ENCODE measurements at regions of chr5 and their contacts with region 1.

Region 1: DNA sequence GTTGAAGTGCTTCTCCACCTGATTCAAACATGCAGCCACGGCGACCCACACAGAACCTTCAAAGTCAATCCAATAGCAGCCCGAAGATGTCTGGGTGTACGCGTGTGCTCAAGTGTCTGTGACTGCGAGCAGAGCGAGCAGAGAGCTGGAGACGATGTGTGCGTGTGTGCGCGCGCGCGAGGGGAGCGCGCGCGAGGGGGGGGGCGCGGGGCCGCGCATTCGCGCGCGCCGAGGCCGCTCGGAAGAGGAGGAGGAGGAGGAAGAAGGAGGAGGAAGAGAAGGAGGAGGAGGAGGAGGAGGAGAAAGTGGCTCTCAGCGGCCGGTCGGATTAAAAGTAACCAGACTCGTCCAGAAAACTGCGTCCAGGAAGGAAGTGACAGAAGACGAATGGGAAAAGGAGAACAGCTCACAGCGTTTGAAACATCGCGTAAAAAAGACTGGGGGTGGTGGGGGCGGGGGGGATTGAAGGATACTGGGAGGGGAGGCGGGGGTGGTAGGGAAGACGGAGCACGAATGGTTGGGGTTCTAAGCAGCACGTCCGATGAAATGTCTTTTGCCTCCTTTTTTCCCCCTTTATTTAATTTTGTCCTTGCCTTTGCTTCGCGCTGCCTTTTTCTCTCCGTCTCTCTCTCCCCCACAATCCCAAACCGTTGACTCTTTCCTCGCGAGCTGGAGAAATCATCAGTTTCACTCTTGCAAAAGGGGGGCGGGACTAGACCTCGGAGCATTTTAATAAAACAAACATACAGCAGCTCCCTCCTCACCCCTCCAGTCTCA is at the start of gene MEF2C:
- DNase-seq: peak; percentile 84 to 89 (median 86)
- ATAC-seq: peak; percentile 74
- H3K4me3 ChIP-seq: peak within 1 kb of the TSS; percentile 55
- H3K27ac ChIP-seq: peak within 1 kb of the TSS; percentile 87
- H3K4me1 ChIP-seq: peaks cover 3 to 8% of the 10 kb centered on the region in 2 experiments; a peak in 4 of 5 replicates
- H3K27me3 ChIP-seq: no peaks in the 10 kb centered on the region
- CTCF ChIP-seq: no peak
- EP300 ChIP-seq: peak; percentile 22; the same call in 1 of the 2 replicates
- POLR2A ChIP-seq: peak; percentile 59; the same call in 1 of the 2 replicates
- RAD21 ChIP-seq: no peak
- polyA plus RNA-seq, gene MEF2C: 48.2 to 66.3 TPM

Region 2: DNA sequence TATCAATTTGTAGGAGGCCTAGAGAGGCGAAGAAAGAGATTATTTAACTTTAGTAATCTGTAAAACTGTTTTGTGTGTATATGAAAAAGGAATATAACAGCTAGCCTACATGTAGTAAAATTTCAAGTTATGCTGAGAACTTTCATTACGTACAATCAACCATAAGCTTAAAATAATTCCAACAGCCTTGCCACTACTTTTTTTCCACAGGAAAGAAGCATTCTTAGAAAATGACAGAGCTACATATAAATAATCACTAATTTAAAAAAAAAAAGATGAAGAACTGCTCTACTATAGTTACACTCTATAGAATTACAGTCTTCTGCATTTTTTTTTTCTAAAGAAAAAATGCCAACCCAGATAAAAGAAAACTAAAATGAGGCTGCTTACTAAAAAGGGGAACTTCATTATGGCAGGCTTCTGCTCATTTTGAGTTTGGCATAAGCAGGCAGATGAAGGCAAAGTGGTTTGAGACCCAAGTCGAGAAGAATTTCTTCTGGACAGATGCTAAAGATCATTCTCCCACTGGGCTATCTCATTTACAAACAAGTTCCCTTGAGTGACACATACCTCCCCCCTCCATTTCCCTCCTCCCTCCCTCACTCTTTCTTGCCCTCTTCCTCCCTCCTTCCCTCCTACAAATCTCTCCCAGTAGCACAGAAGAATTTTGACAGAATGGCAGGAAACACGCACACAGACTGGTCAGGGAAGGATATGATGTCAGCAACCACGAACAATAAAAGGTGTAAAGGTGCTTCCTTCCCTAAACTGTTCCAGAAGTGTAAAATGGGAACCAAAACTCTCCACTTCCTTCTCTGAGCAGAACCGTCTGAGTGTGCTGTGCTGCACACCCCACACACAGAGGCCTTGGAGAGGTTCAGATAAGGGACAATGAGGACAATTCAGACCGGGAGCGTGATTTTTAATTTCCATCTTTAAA is 56.3 kb before region 1 on chr5:
- CTCF ChIA-PET with region 1: no interaction called
- POLR2A ChIA-PET with region 1: interaction called, 4 read pairs
- in situ Hi-C with region 1: no loop called
- intact Hi-C with region 1: loop called (anchors 5 kb)
- DNase-seq: peak; percentile 17 to 72 (median 38)
- ATAC-seq: peak; percentile 80
- H3K4me3 ChIP-seq: no peak overlapping the region
- H3K27ac ChIP-seq: peak overlapping the region; percentile 69; the same call in 2 of the 3 replicates
- H3K4me1 ChIP-seq: peaks cover 0 to 16% of the 10 kb centered on the region in 2 experiments; a peak in 3 of 5 replicates
- H3K27me3 ChIP-seq: no peaks in the 10 kb centered on the region
- CTCF ChIP-seq: no peak
- EP300 ChIP-seq: peak; percentile 6; the same call in 1 of the 2 replicates
- POLR2A ChIP-seq: no peak
- RAD21 ChIP-seq: no peak

Region 3: DNA sequence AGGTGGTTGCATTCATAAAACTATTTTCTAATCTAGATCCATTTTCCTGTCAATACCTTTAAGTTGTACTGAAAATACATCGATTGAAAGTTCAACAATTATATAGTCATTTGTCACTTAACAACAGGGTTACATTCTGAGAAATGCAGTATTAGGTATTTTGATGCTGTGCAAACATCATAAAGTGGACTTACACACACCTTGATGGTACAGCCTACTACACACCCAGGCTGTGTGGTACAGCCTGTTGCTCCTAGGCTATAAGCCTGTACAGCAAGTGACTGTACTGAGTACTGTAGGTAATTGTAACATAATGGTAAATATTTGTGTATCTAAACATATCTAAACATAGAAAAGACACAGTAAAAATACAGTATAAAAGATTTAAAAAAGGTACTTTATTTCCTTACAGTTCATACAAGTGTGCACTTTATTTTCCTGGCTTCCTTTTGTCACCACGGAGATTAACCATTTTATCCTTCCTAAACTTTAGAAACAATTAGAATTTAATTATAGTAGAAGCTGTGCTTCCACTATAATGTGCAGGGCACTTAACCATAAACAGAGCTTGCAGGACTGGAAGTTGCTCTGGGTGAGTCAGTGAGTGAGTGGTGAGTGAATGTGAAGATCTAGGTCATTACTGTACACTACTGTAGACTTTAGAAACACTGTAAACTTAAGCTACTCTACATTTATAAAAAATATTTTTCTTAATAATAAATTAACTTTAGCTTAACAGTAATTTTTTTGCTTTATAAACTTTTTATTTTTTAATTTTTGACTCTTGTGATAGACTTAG is 42.6 kb after region 1 on chr5:
- CTCF ChIA-PET with region 1: no interaction called
- POLR2A ChIA-PET with region 1: no interaction called
- in situ Hi-C with region 1: no loop called
- intact Hi-C with region 1: loop called (anchors 2 kb)
- DNase-seq: peak in 1 of 4 experiments; percentile 35
- ATAC-seq: peak; percentile 69
- H3K4me3 ChIP-seq: no peak overlapping the region
- H3K27ac ChIP-seq: peak overlapping the region; percentile 16; the same call in 2 of the 3 replicates
- H3K4me1 ChIP-seq: peaks cover 0 to 36% of the 10 kb centered on the region in 2 experiments; a peak in 3 of 5 replicates
- H3K27me3 ChIP-seq: no peaks in the 10 kb centered on the region
- CTCF ChIP-seq: no peak
- EP300 ChIP-seq: no peak
- POLR2A ChIP-seq: no peak
- RAD21 ChIP-seq: no peak

Region 4: GRCh38 chr5:89043676-89044075 is 160.4 kb after region 1 on chr5:
- CTCF ChIA-PET with region 1: no interaction called
- POLR2A ChIA-PET with region 1: no interaction called
- in situ Hi-C with region 1: no loop called
- intact Hi-C with region 1: loop called (anchors 10 kb)
- DNase-seq: peak in 2 of 4 experiments; percentile 30 to 58
- ATAC-seq: peak; percentile 64
- H3K4me3 ChIP-seq: no peak overlapping the region
- H3K27ac ChIP-seq: no peak overlapping the region
- H3K4me1 ChIP-seq: peaks cover 0 to 30% of the 10 kb centered on the region in 2 experiments; a peak in 4 of 5 replicates
- H3K27me3 ChIP-seq: no peaks in the 10 kb centered on the region
- CTCF ChIP-seq: no peak
- EP300 ChIP-seq: peak; percentile 79
- POLR2A ChIP-seq: no peak
- RAD21 ChIP-seq: peak in 1 of 2 experiments; percentile 8; a peak in 1 of 4 replicates

Region 5: DNA sequence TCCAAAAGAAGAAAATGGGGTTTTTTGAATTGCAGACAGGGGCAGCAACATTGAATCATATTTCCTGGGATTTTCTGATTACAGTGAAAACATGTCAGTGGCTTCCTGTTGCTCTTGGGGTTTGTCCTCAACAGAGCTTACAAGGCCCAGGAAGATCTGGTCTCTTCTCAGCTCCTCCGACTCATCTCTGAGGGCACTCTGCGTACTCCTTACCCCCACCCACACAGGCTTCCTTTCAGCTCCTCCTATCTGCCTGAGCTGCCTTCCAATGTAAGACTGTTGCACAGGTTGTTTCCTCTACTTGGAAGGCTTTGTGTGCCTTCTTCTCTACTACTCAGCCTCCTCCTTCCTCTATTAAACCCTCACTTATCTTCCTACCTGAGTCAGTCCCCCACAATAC is 244.8 kb after region 1 on chr5:
- CTCF ChIA-PET with region 1: no interaction called
- POLR2A ChIA-PET with region 1: no interaction called
- in situ Hi-C with region 1: no loop called
- intact Hi-C with region 1: loop called (anchors 2 kb)
- DNase-seq: peak; percentile 12 to 84 (median 42)
- ATAC-seq: peak; percentile 92
- H3K4me3 ChIP-seq: no peak overlapping the region
- H3K27ac ChIP-seq: peak overlapping the region; percentile 7; the same call in 2 of the 3 replicates
- H3K4me1 ChIP-seq: peaks cover 4 to 46% of the 10 kb centered on the region in 2 experiments; a peak in 4 of 5 replicates
- H3K27me3 ChIP-seq: no peaks in the 10 kb centered on the region
- CTCF ChIP-seq: no peak
- EP300 ChIP-seq: no peak; the same call in 1 of the 2 replicates
- POLR2A ChIP-seq: no peak
- RAD21 ChIP-seq: 0 out of 4 replicates have a peak, but pooled peaks have one; percentile 7 to 11

Region 6: GRCh38 chr5:89638871-89639270 is 755.6 kb after region 1 on chr5:
- CTCF ChIA-PET with region 1: no interaction called
- POLR2A ChIA-PET with region 1: no interaction called
- in situ Hi-C with region 1: no loop called
- intact Hi-C with region 1: no loop called
- DNase-seq: no peak
- ATAC-seq: no peak
- H3K4me3 ChIP-seq: no peak overlapping the region
- H3K27ac ChIP-seq: no peak overlapping the region
- H3K4me1 ChIP-seq: no peaks in the 10 kb centered on the region
- H3K27me3 ChIP-seq: no peaks in the 10 kb centered on the region
- CTCF ChIP-seq: no peak
- EP300 ChIP-seq: no peak
- POLR2A ChIP-seq: no peak
- RAD21 ChIP-seq: no peak